ENCODE measurements at regions of chr12 and their contacts with region 1.

Region 1: GRCh38 chr12:119249326-119250155 is 70.8 kb downstream of the HSPB8 start:
- DNase-seq: no peak
- ATAC-seq: no peak

Region 2: DNA sequence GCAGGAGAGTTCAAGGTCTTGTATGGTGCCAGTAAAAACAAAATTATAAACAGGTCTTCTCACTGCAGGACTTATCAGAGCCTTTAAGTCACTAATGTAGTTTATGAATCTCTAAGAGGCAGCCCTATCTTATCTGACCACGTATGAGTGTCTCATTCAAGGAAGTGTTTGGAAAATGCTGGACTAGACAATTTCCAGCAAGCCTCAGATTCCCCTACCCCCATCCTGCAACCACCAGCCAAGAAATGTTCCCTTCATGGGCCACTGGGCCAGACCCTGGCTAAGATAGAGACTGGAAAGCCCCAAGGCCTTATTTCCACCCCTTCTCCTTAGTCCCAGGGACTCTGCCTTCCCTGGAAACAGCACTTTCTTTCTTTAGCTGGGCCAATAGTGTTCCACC is 66.4 kb before region 1 on chr12:
- intact Hi-C with region 1: loop called (anchors 2 kb)
- DNase-seq: no peak
- ATAC-seq: peak; percentile 22

Region 3: GRCh38 chr12:119208622-119209061 is 40.9 kb before region 1 on chr12:
- intact Hi-C with region 1: loop called (anchors 2 kb)
- DNase-seq: peak; percentile 92
- ATAC-seq: peak; percentile 93

Region 4: GRCh38 chr12:119328111-119328510 is 78.6 kb after region 1 on chr12:
- intact Hi-C with region 1: no loop called
- DNase-seq: no peak
- ATAC-seq: peak; percentile 66

Region 5: DNA sequence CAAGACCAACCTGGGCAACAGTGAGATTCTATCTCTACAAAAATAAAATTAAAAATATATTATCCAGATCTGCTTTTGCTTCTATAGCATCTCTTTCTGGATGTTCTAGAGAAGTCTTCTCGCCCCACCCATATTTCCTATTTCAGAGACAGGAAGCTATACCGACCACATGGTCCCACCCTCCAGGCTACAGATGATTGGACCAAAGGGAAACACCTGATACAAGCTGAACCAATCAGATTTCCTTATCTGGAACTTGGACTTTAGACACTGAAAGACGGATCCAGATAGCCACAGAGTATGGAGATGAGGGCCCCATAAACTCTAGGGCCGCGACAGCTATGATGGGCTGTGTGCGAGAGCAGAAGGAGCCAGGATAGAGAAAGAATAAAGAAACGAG is 133.7 kb after region 1 on chr12:
- intact Hi-C with region 1: loop called (anchors 5 kb)
- DNase-seq: no peak
- ATAC-seq: no peak

Region 6: DNA sequence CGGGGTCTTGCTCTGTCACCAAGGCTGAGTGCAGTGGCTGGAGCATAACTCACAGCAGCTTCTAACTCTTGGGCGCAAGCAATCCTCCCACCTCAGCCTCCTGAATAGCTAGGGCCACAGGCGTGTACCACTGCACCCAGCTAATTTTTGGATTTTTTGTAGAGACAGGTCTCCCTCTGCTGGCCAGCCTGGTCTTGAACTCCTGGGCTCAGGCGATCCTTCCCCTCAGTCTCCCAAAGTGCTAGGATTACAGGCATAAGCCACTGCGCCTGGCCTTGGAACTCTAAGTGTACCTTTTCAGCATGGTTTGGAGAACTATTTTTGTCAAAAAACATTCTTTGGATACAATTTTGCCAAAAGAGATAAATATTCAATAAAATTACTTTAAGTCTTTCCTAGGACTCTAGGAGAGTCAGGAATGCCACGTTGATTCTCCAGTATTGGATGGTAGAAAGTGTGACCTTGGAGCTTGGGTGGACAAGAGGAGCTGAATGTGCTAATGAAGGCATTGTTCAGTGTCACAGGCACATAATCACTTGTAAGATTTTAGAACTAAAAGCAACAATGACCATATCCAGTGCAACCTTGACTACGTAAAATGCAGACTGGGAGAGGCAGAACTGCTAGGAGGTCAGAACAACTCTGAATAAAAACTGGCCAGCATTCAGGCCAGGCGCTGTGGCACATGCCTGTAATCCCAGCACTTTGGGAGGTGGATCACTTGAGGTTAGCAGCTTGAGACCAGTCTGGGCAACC is 1217.2 kb after region 1 on chr12:
- intact Hi-C with region 1: no loop called
- DNase-seq: no peak
- ATAC-seq: no peak

Measured in Right ventricle myocardium inferior (tissue), 1 donor.